IMR-90 (cell line): ENCODE measurements at regions of chr7 and their contacts with region 1.

Region 1: DNA sequence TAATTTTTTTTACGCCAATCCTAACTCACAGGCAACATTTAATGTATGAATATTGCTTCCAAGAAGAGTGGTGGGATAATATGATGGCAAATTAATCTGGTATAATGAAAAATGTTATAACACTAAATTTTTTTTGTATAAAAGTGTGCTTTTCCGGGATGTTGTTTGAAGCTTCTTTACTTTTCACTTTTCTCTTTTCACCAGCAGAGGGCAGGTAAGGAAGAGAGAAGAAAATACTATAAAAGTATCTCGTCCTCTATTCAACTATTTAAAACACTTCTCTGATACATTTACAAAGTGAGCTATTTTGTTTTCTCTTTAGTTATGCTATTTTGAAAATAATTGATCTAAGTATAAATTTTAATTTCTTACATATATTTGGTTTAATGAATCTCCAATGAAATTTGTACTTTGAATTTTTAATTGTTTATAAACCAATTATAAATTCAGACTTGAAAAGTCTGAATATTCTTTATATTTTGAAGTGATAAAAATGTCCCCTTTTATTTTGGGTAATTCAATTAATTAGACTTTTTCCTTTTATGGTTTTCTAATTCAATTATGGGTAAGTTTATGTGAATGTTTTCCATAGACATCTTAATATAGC is 20.7 kb upstream of the CFTR start:
- DNase-seq: peak; percentile 44
- ATAC-seq: peak; percentile 64; the same call in 1 of the 2 replicates
- H3K4me3 ChIP-seq: no peak overlapping the region
- H3K27ac ChIP-seq: no peak overlapping the region
- H3K4me1 ChIP-seq: no peaks in the 10 kb centered on the region
- H3K27me3 ChIP-seq: no peaks in the 10 kb centered on the region
- CTCF ChIP-seq: peak; percentile 73
- POLR2A ChIP-seq: no peak
- RAD21 ChIP-seq: peak; percentile 61

Region 2: GRCh38 chr7:117479225-117480054 is 20.4 kb after region 1 on chr7 and contains the start of gene CFTR:
- CTCF ChIA-PET with region 1: interaction called, 12 read pairs
- POLR2A ChIA-PET with region 1: no interaction called
- dilution Hi-C with region 1: no loop called
- in situ Hi-C with region 1: no loop called
- intact Hi-C with region 1: no loop called
- DNase-seq: no peak
- ATAC-seq: peak; percentile 75
- H3K4me3 ChIP-seq: peak within 1 kb of the TSS; percentile 51
- H3K27ac ChIP-seq: no peak within 1 kb of the TSS
- H3K4me1 ChIP-seq: no peaks in the 10 kb centered on the region
- H3K27me3 ChIP-seq: peaks cover 12% of the 10 kb centered on the region
- CTCF ChIP-seq: no peak
- POLR2A ChIP-seq: no peak
- RAD21 ChIP-seq: no peak
- total RNA-seq, gene CFTR: under 0.01 and 0.18 TPM in 2 replicates

Region 3: GRCh38 chr7:117673839-117674238 is 214.8 kb after region 1 on chr7:
- CTCF ChIA-PET with region 1: no interaction called
- POLR2A ChIA-PET with region 1: no interaction called
- dilution Hi-C with region 1: no loop called
- in situ Hi-C with region 1: no loop called
- intact Hi-C with region 1: loop called (anchors 1 kb)
- DNase-seq: peak; percentile 67
- ATAC-seq: peak; percentile 73
- H3K4me3 ChIP-seq: no peak overlapping the region
- H3K27ac ChIP-seq: no peak overlapping the region
- H3K4me1 ChIP-seq: peaks cover 11% of the 10 kb centered on the region; the same call in 1 of the 2 replicates
- H3K27me3 ChIP-seq: peaks cover 2% of the 10 kb centered on the region; the same call in 1 of the 2 replicates
- CTCF ChIP-seq: peak; percentile 57
- POLR2A ChIP-seq: no peak
- RAD21 ChIP-seq: peak; percentile 51